ENCODE measurements at regions of chr2 and their contacts with region 1.

Region 1: DNA sequence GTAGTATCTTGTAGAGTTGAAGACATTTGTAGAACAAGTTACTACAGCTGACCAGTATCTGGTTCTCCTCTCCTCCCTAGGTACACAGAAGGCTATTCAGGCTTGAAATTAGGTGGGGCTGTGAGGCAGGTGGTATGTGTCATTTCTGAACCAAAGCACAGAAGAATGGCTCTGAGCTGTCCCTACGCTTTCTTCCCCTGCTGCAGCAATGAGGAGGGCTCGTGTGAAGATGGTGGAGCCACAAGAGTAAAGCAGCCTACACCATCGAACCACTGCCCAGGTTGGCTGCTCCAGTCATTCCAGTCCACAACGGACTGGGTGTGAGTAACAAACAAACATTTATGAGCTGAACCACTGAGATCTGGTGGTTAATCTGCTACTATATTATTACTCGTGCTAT is 148.9 kb downstream of the DTNB start:
- DNase-seq: no peak
- ATAC-seq: peak; percentile 62

Region 2: DNA sequence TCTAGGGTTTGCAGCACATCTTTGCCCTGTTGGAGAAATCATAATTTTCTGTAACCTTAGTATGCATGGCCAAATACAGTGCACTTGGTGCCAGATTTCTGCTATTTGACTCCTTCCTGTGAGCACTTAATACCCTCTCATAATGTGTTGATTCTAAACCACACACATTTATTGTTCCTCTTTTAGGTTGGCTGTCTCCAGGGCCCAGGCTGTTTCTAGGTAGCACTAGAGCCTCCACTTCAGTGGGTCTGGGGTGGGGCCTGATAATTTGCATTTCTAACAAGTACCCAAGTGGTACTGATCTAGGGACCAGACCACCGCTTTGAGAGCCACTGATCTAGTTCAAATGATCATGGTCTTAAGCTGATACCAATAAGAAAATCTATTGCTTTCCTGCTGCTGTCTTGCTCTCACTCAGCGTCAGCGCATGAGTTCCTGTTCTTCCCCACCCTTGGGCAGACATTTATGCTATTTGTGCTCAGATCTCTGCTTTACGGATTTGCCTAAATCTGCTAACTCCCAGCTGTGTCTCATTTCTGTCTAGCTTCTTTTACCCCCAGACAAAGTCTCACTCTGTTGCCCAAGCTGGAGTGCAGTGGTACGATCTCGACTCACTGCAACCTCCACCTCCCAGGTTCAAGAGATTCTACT is 738.7 kb before region 1 on chr2:
- intact Hi-C with region 1: no loop called
- DNase-seq: peak in 1 of 2 donors; percentile 21
- ATAC-seq: peak; percentile 32

Region 3: GRCh38 chr2:25557179-25558036 is 32.9 kb after region 1 on chr2:
- intact Hi-C with region 1: loop called in 1 of 2 experiments (anchors 2 kb)
- DNase-seq: no peak
- ATAC-seq: no peak

Measured in left colon (tissue), 2 donors.